ENCODE measurements at regions of chr2 and their contacts with region 1.

Region 1: GRCh38 chr2:207529330-207530159 is at the start of gene CREB1:
- DNase-seq: peak; percentile 100
- H3K4me3 Mint-ChIP-seq: peak within 1 kb of the TSS; percentile 99
- H3K27ac Mint-ChIP-seq: peak within 1 kb of the TSS; percentile 100
- H3K4me1 Mint-ChIP-seq: peaks cover 52% of the 10 kb centered on the region
- H3K27me3 Mint-ChIP-seq: no peaks in the 10 kb centered on the region
- total RNA-seq, gene CREB1: 98.2 and 111 TPM in 2 replicates

Region 2: DNA sequence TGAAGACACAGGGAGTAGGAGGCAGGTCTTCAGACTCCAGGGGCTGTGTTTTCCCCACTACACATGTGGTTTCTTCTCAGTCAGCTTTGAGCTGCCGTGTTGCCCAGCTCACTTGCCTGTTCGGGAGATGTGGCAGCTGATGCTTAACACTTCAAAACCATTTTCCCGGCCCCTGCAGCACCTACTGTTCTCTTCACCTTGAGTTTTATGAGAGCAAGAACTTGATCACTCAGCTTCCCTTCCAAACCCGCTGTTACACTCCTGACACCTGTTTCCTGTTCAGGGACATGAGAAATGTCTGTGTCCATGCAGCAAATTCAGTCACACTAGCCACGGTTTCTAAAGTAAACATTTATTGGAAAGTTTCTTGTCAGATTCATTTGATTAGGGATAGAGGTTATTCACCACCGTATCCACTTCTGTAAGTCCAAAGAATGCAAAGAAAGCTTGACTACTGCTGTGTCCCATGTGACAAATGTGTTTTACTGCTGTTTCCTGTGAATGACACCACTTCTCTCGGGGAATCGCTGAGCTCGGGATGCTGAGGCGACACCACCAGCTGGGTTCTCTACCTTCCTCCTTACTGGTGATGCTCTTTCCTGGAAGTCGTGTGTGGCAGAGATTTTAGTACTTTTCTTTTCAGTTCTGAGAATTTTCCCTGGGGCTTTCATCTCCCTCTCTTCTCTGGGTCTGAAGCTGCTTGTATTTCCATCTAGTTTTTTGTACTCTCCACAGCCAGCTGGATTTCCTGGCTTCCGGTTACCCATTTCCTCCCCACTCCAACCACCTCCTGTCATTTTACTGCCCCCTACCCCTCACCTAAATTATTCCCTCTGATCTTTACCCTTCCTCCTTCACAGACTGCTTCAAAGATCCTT is 455.5 kb before region 1 on chr2:
- intact Hi-C with region 1: no loop called
- DNase-seq: peak; percentile 39
- H3K4me3 Mint-ChIP-seq: peak overlapping the region; percentile 71
- H3K27ac Mint-ChIP-seq: peak overlapping the region; percentile 79
- H3K4me1 Mint-ChIP-seq: peaks cover 46% of the 10 kb centered on the region
- H3K27me3 Mint-ChIP-seq: no peaks in the 10 kb centered on the region

Region 3: DNA sequence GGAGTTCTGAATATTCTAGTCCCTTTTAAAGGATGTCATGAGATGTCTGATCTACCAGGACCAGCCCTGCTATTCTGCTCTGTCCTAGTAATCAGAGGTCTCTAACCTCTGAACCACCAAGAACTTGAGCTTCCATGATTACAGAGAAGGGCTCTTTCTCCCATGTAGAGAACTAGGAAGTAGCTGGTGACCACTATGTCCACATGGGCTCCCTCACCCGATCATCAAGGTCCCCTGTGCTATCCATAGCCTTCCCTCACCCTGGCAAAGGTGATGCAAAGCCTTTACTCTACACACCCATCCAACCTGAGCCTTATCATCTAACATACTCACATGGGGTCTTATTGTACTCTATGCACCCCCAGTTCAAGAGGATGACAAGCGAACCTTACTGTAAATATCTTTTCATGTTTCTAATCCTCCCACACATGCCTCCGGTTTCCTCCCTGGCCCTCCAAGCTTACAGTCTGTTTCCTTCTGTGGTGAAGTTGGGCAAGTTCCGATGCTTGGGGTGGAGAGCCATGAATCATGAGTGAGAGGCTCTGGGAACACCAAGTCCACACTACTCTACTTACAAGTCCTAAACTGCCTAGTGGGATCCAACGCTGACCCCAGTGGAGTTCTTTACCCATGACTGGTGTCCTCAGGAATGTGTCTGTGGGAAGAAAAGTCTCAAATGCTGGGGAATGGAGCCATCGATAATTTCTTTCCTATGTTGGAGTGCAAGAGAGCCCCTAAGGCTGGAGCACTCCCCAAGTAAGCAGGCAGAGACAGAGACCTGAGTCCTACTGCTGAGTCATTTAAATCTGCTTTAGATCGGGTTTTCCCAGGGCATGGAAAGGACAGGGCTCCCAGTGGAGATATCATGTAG is 290.5 kb before region 1 on chr2:
- intact Hi-C with region 1: loop called (anchors 1 kb)
- DNase-seq: no peak
- H3K4me3 Mint-ChIP-seq: peak overlapping the region; percentile 50
- H3K27ac Mint-ChIP-seq: peak overlapping the region; percentile 73
- H3K4me1 Mint-ChIP-seq: peaks cover 19% of the 10 kb centered on the region
- H3K27me3 Mint-ChIP-seq: no peaks in the 10 kb centered on the region

Region 4: GRCh38 chr2:207473049-207473930 is 56.3 kb before region 1 on chr2:
- intact Hi-C with region 1: loop called (anchors 1 kb)
- DNase-seq: peak; percentile 47
- H3K4me3 Mint-ChIP-seq: no peak overlapping the region
- H3K27ac Mint-ChIP-seq: no peak overlapping the region
- H3K4me1 Mint-ChIP-seq: peaks cover 26% of the 10 kb centered on the region
- H3K27me3 Mint-ChIP-seq: no peaks in the 10 kb centered on the region

Region 5: DNA sequence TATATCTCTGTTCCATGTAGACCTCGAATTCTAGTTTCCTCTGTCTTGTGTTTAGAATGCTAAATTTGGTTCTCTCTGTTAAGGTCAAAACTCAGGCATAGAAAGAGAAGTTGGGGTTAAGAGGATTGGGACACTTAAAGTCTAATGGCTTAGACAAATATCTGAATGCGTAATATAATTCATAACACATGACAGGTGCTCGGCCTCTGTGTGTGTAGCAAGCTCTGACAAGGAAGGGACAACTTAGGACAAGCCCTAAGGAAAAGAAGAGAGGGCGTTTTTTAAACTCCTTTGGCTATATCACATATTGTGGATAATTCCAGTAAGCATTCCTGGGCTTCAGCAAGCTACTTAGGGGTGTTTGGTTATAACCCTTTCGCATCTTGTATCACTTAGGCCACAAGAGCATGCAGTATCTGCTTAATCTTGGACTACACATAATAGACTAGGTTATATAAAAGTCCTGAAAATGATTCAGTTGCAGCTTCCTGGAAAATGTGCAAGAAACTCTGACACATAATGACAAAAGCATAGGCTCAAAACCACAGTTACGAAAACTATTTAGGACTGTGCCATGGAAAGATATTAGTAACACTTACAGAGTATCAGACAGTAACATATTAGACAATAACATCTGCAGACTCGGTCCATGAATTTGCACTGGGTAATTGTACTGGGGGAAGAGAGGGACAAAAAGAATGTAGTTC is 15.8 kb before region 1 on chr2:
- intact Hi-C with region 1: loop called (anchors 2 kb)
- DNase-seq: no peak
- H3K4me3 Mint-ChIP-seq: no peak overlapping the region
- H3K27ac Mint-ChIP-seq: no peak overlapping the region
- H3K4me1 Mint-ChIP-seq: peaks cover 36% of the 10 kb centered on the region
- H3K27me3 Mint-ChIP-seq: peaks cover 4% of the 10 kb centered on the region

Region 6: GRCh38 chr2:207625018-207625907 is 95.7 kb after region 1 on chr2 and contains the start of gene METTL21A:
- intact Hi-C with region 1: loop called (anchors 1 kb)
- DNase-seq: peak; percentile 93
- H3K4me3 Mint-ChIP-seq: peak within 1 kb of the TSS; percentile 89
- H3K27ac Mint-ChIP-seq: peak within 1 kb of the TSS; percentile 95
- H3K4me1 Mint-ChIP-seq: peaks cover 40% of the 10 kb centered on the region
- H3K27me3 Mint-ChIP-seq: no peaks in the 10 kb centered on the region
- total RNA-seq, gene METTL21A: 33.2 and 36.1 TPM in 2 replicates

Region 7: GRCh38 chr2:208265801-208266552 is 736.4 kb after region 1 on chr2 and contains the start of gene PIKFYVE:
- intact Hi-C with region 1: loop called (anchors 2 kb)
- DNase-seq: peak; percentile 88
- H3K4me3 Mint-ChIP-seq: peak within 1 kb of the TSS; percentile 89
- H3K27ac Mint-ChIP-seq: peak within 1 kb of the TSS; percentile 92
- H3K4me1 Mint-ChIP-seq: peaks cover 46% of the 10 kb centered on the region
- H3K27me3 Mint-ChIP-seq: no peaks in the 10 kb centered on the region
- total RNA-seq, gene PIKFYVE: 28.7 and 33.5 TPM in 2 replicates